ENCODE measurements at regions of chr3 and their contacts with region 1.

Region 1: DNA sequence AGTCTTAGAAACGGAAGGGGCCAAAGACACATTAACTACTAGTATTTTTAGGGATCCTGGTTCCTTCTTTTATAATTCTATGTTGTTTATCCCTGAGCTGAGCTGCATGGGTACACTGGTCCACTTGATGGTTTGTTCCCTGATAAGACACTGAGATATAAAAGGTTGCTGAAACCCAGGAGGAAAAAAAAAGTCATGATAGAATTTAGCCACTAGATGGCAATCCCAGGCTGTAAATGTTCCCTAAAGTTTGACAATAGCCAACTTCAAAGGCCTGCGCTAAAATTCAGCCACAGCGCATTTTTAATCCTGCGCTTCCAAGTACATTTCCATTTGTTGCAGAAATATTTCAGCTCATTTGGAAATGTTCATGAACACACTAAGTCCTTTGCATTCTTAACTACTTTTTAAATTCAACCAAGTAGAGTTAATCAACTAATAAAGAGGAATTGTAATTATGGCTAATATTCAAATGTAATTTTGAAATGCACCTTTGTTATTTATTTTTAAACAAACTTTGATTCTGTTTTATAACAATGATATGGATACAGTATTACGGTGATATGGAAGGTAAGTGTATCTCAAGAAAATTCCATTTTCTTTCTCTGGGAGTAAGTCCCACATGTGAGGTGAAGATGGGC is 249.3 kb upstream of the FEZF2 start:
- DNase-seq: peak in 3 of 14 experiments; percentile 12 to 26 (median 19)
- ATAC-seq: no peak
- H3K4me3 ChIP-seq: no peak overlapping the region
- H3K4me3 Mint-ChIP-seq: no peak overlapping the region
- H3K27ac ChIP-seq: no peak overlapping the region
- H3K27ac Mint-ChIP-seq: no peak overlapping the region
- H3K4me1 ChIP-seq: no peaks in the 10 kb centered on the region
- H3K4me1 Mint-ChIP-seq: no peaks in the 10 kb centered on the region
- H3K27me3 ChIP-seq: no peaks in the 10 kb centered on the region
- H3K27me3 Mint-ChIP-seq: peaks cover 10% of the 10 kb centered on the region
- CTCF ChIP-seq: no peak

Region 2: GRCh38 chr3:64484289-64484992 is 1861.8 kb after region 1 on chr3:
- CTCF ChIA-PET with region 1: no interaction called
- POLR2A ChIA-PET with region 1: no interaction called
- intact Hi-C with region 1: loop called in 1 of 2 experiments (anchors 5 kb)
- DNase-seq: peak; percentile 30 to 70 (median 47)
- ATAC-seq: peak; percentile 76
- H3K4me3 ChIP-seq: no peak overlapping the region
- H3K4me3 Mint-ChIP-seq: no peak overlapping the region
- H3K27ac ChIP-seq: no peak overlapping the region
- H3K27ac Mint-ChIP-seq: no peak overlapping the region
- H3K4me1 ChIP-seq: peaks cover 4% of the 10 kb centered on the region
- H3K4me1 Mint-ChIP-seq: no peaks in the 10 kb centered on the region
- H3K27me3 ChIP-seq: peaks cover 1 to 12% of the 10 kb centered on the region in 2 experiments
- H3K27me3 Mint-ChIP-seq: peaks cover 26% of the 10 kb centered on the region
- CTCF ChIP-seq: peak; percentile 60

Measured in CD4-positive, alpha-beta T cell (primary cell).